HCT116 (cell line): ENCODE measurements at regions of chr14 and their contacts with region 1.

Region 1: GRCh38 chr14:33545696-33546095 is 405.2 kb downstream of the EGLN3 start:
- DNase-seq: no peak
- ATAC-seq: no peak
- H3K4me3 ChIP-seq: no peak overlapping the region
- H3K27ac ChIP-seq: no peak overlapping the region
- H3K4me1 ChIP-seq: no peaks in the 10 kb centered on the region
- H3K27me3 ChIP-seq: no peaks in the 10 kb centered on the region; the same call in 1 of the 2 replicates
- CTCF ChIP-seq: no peak
- POLR2A ChIP-seq: no peak
- RAD21 ChIP-seq: no peak

Region 2: DNA sequence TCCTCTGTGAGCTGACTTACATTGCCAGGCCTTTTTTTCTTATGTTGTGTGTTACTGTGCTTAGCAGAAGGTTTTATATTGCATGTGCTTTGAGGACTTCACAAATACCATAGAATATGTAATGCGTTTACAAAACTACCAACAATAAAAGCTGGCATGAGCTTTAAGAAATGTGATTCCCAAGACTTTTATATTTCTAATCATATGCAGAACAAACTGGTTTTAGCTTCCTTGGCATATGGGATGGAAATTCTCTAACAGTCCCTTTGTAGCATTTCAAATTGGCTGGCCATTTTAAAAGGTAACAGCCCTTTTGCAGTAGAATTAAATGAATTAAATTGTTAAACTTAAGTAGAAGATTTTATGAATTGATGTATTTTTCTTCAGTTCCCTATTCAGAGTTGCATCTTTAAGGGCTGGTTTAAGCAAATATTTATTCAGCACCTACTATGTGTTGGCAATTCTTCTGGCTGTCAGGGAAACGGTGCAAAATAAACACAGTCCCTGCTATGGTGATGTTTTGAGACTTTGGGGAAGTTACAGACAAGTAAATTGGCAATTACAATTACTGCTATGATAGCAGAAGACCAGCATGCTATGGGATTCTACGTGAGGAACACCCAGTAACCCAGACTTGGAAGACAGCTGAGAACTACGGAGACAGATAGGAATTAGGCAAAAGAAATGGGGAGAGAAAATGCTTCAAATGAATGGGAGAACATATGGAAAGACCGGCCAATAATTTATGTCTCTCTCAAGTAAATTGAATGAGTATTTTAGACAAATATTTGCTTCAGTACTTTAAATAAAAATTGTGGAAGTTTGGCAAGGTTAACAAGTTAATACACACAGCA is 41.2 kb before region 1 on chr14:
- CTCF ChIA-PET with region 1: no interaction called
- POLR2A ChIA-PET with region 1: no interaction called
- RAD21 ChIA-PET with region 1: no interaction called
- intact Hi-C with region 1: loop called (anchors 2 kb)
- DNase-seq: no peak
- ATAC-seq: no peak
- H3K4me3 ChIP-seq: no peak overlapping the region
- H3K27ac ChIP-seq: no peak overlapping the region
- H3K4me1 ChIP-seq: no peaks in the 10 kb centered on the region
- H3K27me3 ChIP-seq: 0 out of 2 replicates have a peak, but pooled peaks cover 4% of the 10 kb centered on the region
- CTCF ChIP-seq: no peak
- POLR2A ChIP-seq: no peak
- RAD21 ChIP-seq: no peak

Region 3: GRCh38 chr14:33631456-33631855 is 85.8 kb after region 1 on chr14:
- CTCF ChIA-PET with region 1: no interaction called
- POLR2A ChIA-PET with region 1: no interaction called
- RAD21 ChIA-PET with region 1: no interaction called
- intact Hi-C with region 1: no loop called
- DNase-seq: no peak
- ATAC-seq: no peak
- H3K4me3 ChIP-seq: no peak overlapping the region
- H3K27ac ChIP-seq: no peak overlapping the region
- H3K4me1 ChIP-seq: no peaks in the 10 kb centered on the region
- H3K27me3 ChIP-seq: peaks cover 10% of the 10 kb centered on the region; the same call in 1 of the 2 replicates
- CTCF ChIP-seq: no peak
- POLR2A ChIP-seq: no peak
- RAD21 ChIP-seq: no peak

Region 4: DNA sequence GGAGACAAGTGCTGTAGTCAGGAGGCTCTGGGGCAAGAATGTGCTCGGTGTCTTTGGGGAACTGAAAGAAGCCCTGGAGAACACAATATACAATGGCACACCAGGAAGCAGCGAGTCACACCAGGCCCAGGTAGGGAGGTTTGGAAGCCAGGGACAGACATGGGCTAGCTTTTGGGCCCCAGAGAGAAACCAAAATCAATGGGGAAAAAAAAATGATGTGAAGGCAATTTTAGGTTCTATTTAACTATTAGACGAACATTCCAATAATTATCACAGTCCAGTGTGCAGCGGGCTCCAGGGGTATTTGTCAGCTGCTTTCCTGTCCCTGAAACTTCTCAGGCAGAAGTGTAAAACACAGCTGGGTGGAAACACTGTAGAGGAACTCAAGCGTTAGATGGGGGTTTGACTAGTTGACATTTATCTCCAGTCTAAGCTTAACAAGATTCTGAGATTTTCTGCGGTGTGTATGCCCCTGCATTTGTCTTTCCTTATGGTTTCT is 426.9 kb after region 1 on chr14:
- CTCF ChIA-PET with region 1: no interaction called
- POLR2A ChIA-PET with region 1: no interaction called
- RAD21 ChIA-PET with region 1: no interaction called
- intact Hi-C with region 1: no loop called
- DNase-seq: no peak
- ATAC-seq: no peak
- H3K4me3 ChIP-seq: no peak overlapping the region
- H3K27ac ChIP-seq: no peak overlapping the region
- H3K4me1 ChIP-seq: no peaks in the 10 kb centered on the region
- H3K27me3 ChIP-seq: no peaks in the 10 kb centered on the region
- CTCF ChIP-seq: no peak
- POLR2A ChIP-seq: no peak
- RAD21 ChIP-seq: no peak